ENCODE measurements at regions of chr4 and their contacts with region 1.

Region 1: GRCh38 chr4:37603070-37603468 is 83.1 kb downstream of the RELL1 start:
- DNase-seq: peak; percentile 74
- ATAC-seq: peak; percentile 82
- H3K4me3 ChIP-seq: no peak overlapping the region
- H3K4me3 Mint-ChIP-seq: no peak overlapping the region
- H3K27ac ChIP-seq: no peak overlapping the region
- H3K27ac Mint-ChIP-seq: no peak overlapping the region
- H3K4me1 ChIP-seq: peaks cover 0 to 3% of the 10 kb centered on the region in 2 donors
- H3K4me1 Mint-ChIP-seq: peaks cover 2% of the 10 kb centered on the region
- H3K27me3 ChIP-seq: no peaks in the 10 kb centered on the region
- H3K27me3 Mint-ChIP-seq: peaks cover 7% of the 10 kb centered on the region
- CTCF ChIP-seq: peak; percentile 94

Region 2: GRCh38 chr4:37573566-37573965 is 29.5 kb before region 1 on chr4:
- CTCF ChIA-PET with region 1: no interaction called
- POLR2A ChIA-PET with region 1: no interaction called
- intact Hi-C with region 1: no loop called
- DNase-seq: no peak
- ATAC-seq: no peak
- H3K4me3 ChIP-seq: no peak overlapping the region
- H3K4me3 Mint-ChIP-seq: no peak overlapping the region
- H3K27ac ChIP-seq: no peak overlapping the region
- H3K27ac Mint-ChIP-seq: no peak overlapping the region
- H3K4me1 ChIP-seq: no peaks in the 10 kb centered on the region
- H3K4me1 Mint-ChIP-seq: no peaks in the 10 kb centered on the region
- H3K27me3 ChIP-seq: no peaks in the 10 kb centered on the region
- H3K27me3 Mint-ChIP-seq: peaks cover 9% of the 10 kb centered on the region
- CTCF ChIP-seq: no peak

Region 3: GRCh38 chr4:37644962-37645361 is 41.9 kb after region 1 on chr4:
- CTCF ChIA-PET with region 1: no interaction called
- POLR2A ChIA-PET with region 1: no interaction called
- intact Hi-C with region 1: no loop called
- DNase-seq: no peak
- ATAC-seq: no peak
- H3K4me3 ChIP-seq: no peak overlapping the region
- H3K4me3 Mint-ChIP-seq: no peak overlapping the region
- H3K27ac ChIP-seq: no peak overlapping the region
- H3K27ac Mint-ChIP-seq: no peak overlapping the region
- H3K4me1 ChIP-seq: no peaks in the 10 kb centered on the region
- H3K4me1 Mint-ChIP-seq: no peaks in the 10 kb centered on the region
- H3K27me3 ChIP-seq: no peaks in the 10 kb centered on the region
- H3K27me3 Mint-ChIP-seq: no peaks in the 10 kb centered on the region
- CTCF ChIP-seq: no peak

Region 4: DNA sequence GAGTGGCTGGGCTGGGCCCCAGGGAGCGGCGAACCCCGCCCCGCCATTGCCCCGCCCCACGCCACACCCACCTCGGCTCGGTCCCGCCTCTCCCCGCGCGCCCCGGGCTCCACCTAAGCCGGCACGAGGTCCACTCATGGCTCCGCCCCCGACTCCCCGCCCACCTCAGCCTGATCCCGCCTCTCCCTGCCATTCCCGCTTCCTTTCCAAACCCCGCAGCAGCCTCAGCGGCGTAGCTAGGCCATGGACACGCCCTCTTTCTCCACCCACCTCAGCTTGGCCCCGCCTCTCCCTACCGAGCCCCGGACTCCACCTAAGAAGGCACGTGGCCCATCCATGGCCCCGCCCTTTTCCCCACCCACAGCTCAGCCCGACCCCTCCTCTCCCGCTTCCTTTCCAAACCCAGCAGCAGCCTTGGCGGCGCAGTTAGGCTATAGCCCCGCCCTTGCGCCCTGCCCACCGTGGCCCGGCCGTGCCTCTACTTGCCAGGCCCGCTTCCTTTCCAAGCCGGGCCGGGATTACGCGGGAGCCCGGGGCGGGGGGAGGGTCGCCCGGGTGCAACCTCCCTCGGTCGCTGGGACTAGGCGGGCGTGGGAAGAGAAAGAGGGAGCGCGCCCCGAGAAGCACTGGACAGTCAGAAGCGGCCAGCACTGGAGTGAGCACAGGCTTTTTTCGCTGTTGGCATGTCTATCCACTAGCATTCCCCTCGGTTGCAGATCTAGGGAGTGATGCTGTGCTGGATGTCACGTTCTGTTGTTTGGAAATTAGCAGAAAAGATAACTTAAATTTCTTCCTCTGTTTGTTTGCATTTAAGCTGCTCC is 83.5 kb after region 1 on chr4 and contains the start of gene RELL1:
- CTCF ChIA-PET with region 1: interaction called, 5 read pairs
- POLR2A ChIA-PET with region 1: no interaction called
- intact Hi-C with region 1: loop called (anchors 5 kb)
- DNase-seq: peak; percentile 96
- ATAC-seq: peak; percentile 85
- H3K4me3 ChIP-seq: peak within 1 kb of the TSS; percentile 66 to 86 (median 81)
- H3K4me3 Mint-ChIP-seq: peak within 1 kb of the TSS; percentile 92
- H3K27ac ChIP-seq: peak within 1 kb of the TSS; percentile 45 to 70
- H3K27ac Mint-ChIP-seq: peak within 1 kb of the TSS; percentile 89
- H3K4me1 ChIP-seq: peaks cover 31% of the 10 kb centered on the region in 2 donors
- H3K4me1 Mint-ChIP-seq: peaks cover 31% of the 10 kb centered on the region
- H3K27me3 ChIP-seq: peaks cover 0 to 12% (median 4%) of the 10 kb centered on the region in 4 experiments
- H3K27me3 Mint-ChIP-seq: peaks cover 12% of the 10 kb centered on the region
- CTCF ChIP-seq: no peak
- total RNA-seq, gene RELL1: 2.7 and 3.2 TPM in 2 replicates

Region 5: DNA sequence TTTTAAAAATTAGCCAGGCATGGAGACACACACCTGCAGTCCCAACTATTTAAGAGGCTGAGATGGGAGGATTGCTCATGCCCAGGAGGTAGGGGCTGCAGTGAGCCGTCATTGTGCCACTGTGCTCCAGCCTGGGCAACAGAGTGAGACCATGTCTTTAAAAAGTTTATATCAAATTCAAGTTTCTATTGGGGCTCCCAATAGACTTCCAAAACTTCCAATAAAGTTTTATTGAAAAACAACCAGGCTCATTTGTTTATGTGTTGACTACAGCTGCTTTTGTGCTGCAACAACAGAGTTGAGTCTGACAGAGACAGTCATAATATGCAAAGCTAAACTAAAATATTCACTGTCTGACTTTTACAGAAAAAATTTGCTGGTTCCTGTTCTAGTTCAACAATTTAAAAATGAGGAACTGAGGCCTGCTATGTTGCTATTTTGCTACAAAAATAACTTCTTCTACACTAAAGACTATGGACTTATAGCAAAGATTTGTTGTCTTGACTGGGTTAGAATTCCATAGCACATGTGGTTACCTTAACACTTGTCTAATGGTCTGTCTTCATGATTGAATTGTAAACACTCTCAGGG is 146.4 kb after region 1 on chr4:
- CTCF ChIA-PET with region 1: interaction called, 10 read pairs
- POLR2A ChIA-PET with region 1: no interaction called
- intact Hi-C with region 1: no loop called
- DNase-seq: peak; percentile 58
- ATAC-seq: peak; percentile 76
- H3K4me3 ChIP-seq: no peak overlapping the region
- H3K4me3 Mint-ChIP-seq: peak overlapping the region; percentile 43
- H3K27ac ChIP-seq: peak overlapping the region; percentile 38 to 52
- H3K27ac Mint-ChIP-seq: peak overlapping the region; percentile 76
- H3K4me1 ChIP-seq: peaks cover 35 to 37% of the 10 kb centered on the region in 2 donors
- H3K4me1 Mint-ChIP-seq: peaks cover 39% of the 10 kb centered on the region
- H3K27me3 ChIP-seq: no peaks in the 10 kb centered on the region
- H3K27me3 Mint-ChIP-seq: no peaks in the 10 kb centered on the region
- CTCF ChIP-seq: no peak

Region 6: DNA sequence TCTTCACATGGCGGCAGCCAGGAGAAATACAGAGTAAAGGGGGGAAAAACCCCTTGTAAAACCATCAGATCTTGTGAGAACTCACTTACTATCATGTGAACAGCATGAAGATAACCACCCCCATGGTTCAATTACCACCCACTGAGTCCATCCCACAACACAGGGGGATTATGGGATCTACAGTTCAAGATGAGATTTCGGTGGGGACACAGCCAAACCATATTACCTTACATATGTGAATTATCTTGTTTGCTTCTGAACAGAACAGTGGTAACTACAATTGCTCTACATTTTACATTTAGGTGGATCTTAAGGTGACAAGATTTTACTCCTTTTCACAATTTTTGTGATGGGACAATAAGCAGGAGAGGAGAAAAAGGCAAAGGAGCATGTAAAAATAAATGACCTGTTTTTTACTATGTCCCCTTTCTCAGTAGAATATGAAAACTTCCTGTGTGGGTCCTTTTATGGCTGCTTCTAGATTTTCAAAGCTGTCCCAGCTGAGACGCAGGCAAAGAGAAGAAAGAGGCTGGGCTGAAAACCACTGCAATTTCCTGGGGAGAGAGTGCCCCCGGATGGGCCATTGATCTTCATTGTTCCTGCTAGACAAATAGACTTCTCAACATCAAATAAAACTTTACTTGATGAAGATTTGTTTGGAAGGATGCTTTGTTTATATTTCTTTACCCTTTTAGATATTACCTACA is 177.5 kb after region 1 on chr4:
- CTCF ChIA-PET with region 1: interaction called, 6 read pairs
- POLR2A ChIA-PET with region 1: no interaction called
- intact Hi-C with region 1: loop called (anchors 1 kb)
- DNase-seq: peak; percentile 48
- ATAC-seq: no peak
- H3K4me3 ChIP-seq: no peak overlapping the region
- H3K4me3 Mint-ChIP-seq: no peak overlapping the region
- H3K27ac ChIP-seq: no peak overlapping the region
- H3K27ac Mint-ChIP-seq: no peak overlapping the region
- H3K4me1 ChIP-seq: no peaks in the 10 kb centered on the region
- H3K4me1 Mint-ChIP-seq: peaks cover 12% of the 10 kb centered on the region
- H3K27me3 ChIP-seq: peaks cover 0 to 3% (median 0%) of the 10 kb centered on the region in 4 experiments
- H3K27me3 Mint-ChIP-seq: no peaks in the 10 kb centered on the region
- CTCF ChIP-seq: peak; percentile 13

Region 7: GRCh38 chr4:37793562-37793961 is 190.5 kb after region 1 on chr4:
- CTCF ChIA-PET with region 1: interaction called, 43 read pairs
- POLR2A ChIA-PET with region 1: no interaction called
- intact Hi-C with region 1: loop called (anchors 1 kb)
- DNase-seq: peak; percentile 45
- ATAC-seq: no peak
- H3K4me3 ChIP-seq: no peak overlapping the region
- H3K4me3 Mint-ChIP-seq: no peak overlapping the region
- H3K27ac ChIP-seq: no peak overlapping the region
- H3K27ac Mint-ChIP-seq: no peak overlapping the region
- H3K4me1 ChIP-seq: no peaks in the 10 kb centered on the region
- H3K4me1 Mint-ChIP-seq: no peaks in the 10 kb centered on the region
- H3K27me3 ChIP-seq: no peaks in the 10 kb centered on the region
- H3K27me3 Mint-ChIP-seq: peaks cover 21% of the 10 kb centered on the region
- CTCF ChIP-seq: peak; percentile 73

Region 8: DNA sequence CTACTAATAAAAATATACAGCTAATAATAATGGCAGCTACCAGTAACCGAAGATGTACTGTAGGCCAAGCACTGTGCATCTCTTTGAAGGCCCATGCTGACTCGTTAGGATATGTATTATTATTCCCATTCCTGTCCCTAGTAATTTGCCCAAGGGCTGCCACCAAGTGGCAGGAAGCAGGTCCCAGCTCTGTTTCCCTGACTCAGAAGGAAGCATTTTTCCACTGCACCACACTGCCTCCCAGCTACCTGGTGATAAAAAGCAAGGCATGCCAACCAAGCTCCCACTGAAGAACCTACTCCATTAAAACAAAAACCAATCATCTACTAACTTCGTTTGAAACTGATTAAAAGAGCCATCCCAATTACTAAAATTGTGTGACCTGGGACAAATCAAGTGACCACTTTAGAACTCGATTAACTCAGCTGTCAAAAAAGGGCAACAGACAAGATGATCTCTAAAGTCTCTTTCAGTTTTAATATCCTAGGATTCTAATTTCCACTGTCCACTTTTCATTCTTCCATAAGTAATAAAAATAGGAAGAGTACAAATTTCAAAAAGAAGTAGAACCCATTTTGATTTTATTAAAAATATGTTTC is 199.1 kb after region 1 on chr4:
- CTCF ChIA-PET with region 1: interaction called, 27 read pairs
- POLR2A ChIA-PET with region 1: no interaction called
- intact Hi-C with region 1: no loop called
- DNase-seq: no peak
- ATAC-seq: no peak
- H3K4me3 ChIP-seq: no peak overlapping the region
- H3K4me3 Mint-ChIP-seq: no peak overlapping the region
- H3K27ac ChIP-seq: no peak overlapping the region
- H3K27ac Mint-ChIP-seq: no peak overlapping the region
- H3K4me1 ChIP-seq: no peaks in the 10 kb centered on the region
- H3K4me1 Mint-ChIP-seq: peaks cover 3% of the 10 kb centered on the region
- H3K27me3 ChIP-seq: no peaks in the 10 kb centered on the region
- H3K27me3 Mint-ChIP-seq: peaks cover 6% of the 10 kb centered on the region
- CTCF ChIP-seq: no peak

Measured in B cell (primary cell).